ENCODE measurements at regions of chr3 and their contacts with region 1.

Region 1: GRCh38 chr3:114764056-114764492 is 383.0 kb downstream of the ZBTB20 start:
- DNase-seq: no peak
- ATAC-seq: no peak
- H3K4me3 ChIP-seq: no peak overlapping the region
- H3K4me3 Mint-ChIP-seq: no peak overlapping the region
- H3K27ac ChIP-seq: no peak overlapping the region
- H3K27ac Mint-ChIP-seq: no peak overlapping the region
- H3K4me1 ChIP-seq: no peaks in the 10 kb centered on the region
- H3K4me1 Mint-ChIP-seq: peaks cover 6% of the 10 kb centered on the region
- H3K27me3 ChIP-seq: no peaks in the 10 kb centered on the region
- H3K27me3 Mint-ChIP-seq: no peaks in the 10 kb centered on the region
- CTCF ChIP-seq: no peak

Region 2: GRCh38 chr3:114823061-114823460 is 59.0 kb after region 1 on chr3:
- CTCF ChIA-PET with region 1: no interaction called
- POLR2A ChIA-PET with region 1: no interaction called
- intact Hi-C with region 1: no loop called
- DNase-seq: no peak
- ATAC-seq: no peak
- H3K4me3 ChIP-seq: no peak overlapping the region
- H3K4me3 Mint-ChIP-seq: no peak overlapping the region
- H3K27ac ChIP-seq: no peak overlapping the region
- H3K27ac Mint-ChIP-seq: no peak overlapping the region
- H3K4me1 ChIP-seq: no peaks in the 10 kb centered on the region
- H3K4me1 Mint-ChIP-seq: no peaks in the 10 kb centered on the region
- H3K27me3 ChIP-seq: no peaks in the 10 kb centered on the region
- H3K27me3 Mint-ChIP-seq: no peaks in the 10 kb centered on the region
- CTCF ChIP-seq: no peak

Region 3: DNA sequence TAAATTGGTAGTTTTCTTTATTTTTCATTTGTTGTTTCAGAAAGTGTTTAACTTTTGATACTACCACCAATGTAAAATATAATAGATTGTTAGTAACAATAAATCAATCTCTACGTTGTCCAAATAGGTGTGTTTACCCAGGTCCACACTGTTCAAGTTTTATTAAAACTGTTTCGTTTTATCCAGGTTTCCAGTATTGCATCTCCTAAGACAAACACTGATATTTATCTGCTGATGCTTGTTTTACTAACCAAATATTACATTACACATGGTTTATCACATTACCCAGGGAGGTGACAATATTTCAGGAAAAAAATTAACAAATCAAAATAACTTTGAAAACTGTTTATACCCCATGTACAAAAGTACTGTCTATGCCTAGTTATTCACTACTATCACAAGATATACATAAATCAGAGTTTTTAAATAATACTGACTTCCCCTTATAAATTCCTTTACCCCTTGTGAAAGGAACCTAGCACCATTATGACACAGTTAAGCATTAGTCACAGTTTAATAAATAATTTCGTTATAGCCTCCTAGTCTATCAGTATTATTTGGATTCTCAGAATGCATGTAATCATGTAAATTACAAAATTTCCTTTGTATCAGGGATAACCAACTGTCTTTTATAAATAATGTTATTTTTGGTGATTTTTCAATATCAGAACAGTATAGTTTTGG is 177.7 kb after region 1 on chr3:
- CTCF ChIA-PET with region 1: interaction called, 10 read pairs
- POLR2A ChIA-PET with region 1: no interaction called
- intact Hi-C with region 1: no loop called
- DNase-seq: no peak
- ATAC-seq: no peak
- H3K4me3 ChIP-seq: no peak overlapping the region
- H3K4me3 Mint-ChIP-seq: no peak overlapping the region
- H3K27ac ChIP-seq: no peak overlapping the region
- H3K27ac Mint-ChIP-seq: no peak overlapping the region
- H3K4me1 ChIP-seq: peaks cover 0 to 3% of the 10 kb centered on the region in 2 donors
- H3K4me1 Mint-ChIP-seq: peaks cover 14% of the 10 kb centered on the region
- H3K27me3 ChIP-seq: no peaks in the 10 kb centered on the region
- H3K27me3 Mint-ChIP-seq: no peaks in the 10 kb centered on the region
- CTCF ChIP-seq: no peak

Measured in B cell (primary cell).